ENCODE measurements at regions of chr7 and their contacts with region 1.

Region 1: GRCh38 chr7:138459413-138460175 is 465 bp upstream of the TRIM24 start:
- H3K4me3 Mint-ChIP-seq: peak overlapping the region; percentile 93
- H3K27ac Mint-ChIP-seq: peak overlapping the region; percentile 97
- H3K4me1 Mint-ChIP-seq: peaks cover 21% of the 10 kb centered on the region
- H3K27me3 Mint-ChIP-seq: no peaks in the 10 kb centered on the region

Region 2: GRCh38 chr7:138575897-138576428 is 116.4 kb after region 1 on chr7:
- intact Hi-C with region 1: loop called (anchors 10 kb)
- H3K4me3 Mint-ChIP-seq: no peak overlapping the region
- H3K27ac Mint-ChIP-seq: no peak overlapping the region
- H3K4me1 Mint-ChIP-seq: no peaks in the 10 kb centered on the region
- H3K27me3 Mint-ChIP-seq: no peaks in the 10 kb centered on the region

Measured in dendritic cell treated with granulocyte-macrophage colony-stimulating factor and Interleukin-4, amounts not matched to agents 40 ng/mL and 50 ng/mL, for 4 days (primary cell).